Activated CD4-positive, alpha-beta T cell treated with anti-CD3 and anti-CD28 coated beads for 36 hours (primary cell): ENCODE measurements at regions of chr22 and their contacts with region 1.

Region 1: DNA sequence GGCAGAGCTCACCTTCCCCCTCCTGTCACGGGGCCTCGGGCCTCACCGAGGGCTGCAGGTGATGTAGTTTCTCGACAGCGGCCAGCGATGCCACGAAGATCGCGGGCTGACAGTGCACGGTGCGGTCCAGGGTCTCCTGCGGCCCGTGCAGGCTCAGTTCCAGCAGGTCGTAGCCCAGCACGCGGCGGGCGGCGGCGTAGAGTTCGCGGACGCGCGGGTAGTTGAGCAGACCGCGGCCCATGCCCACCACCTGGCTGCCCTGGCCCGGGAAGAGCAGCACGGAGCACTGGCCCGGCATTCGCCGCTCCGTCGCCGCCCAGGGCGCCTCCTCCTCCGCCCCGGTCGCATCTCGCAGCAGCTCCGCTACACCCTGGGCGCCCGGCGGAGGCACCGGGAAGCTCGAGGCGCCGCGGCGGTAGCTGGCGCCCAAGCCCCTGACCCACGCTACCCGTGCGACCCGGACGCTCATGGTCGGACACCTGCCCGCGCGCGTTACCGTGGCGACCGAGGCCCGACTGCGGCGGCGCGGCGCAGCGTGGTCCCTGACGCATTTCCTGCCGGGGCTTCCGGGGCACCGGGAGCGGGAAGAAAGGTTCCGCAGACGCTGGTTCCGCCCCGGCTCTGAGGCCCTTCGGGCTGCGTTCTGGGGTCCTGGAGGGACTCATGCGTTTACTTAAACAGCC is at the start of gene MCAT:
- DNase-seq: peak; percentile 88
- ATAC-seq: peak; percentile 93
- H3K4me3 Mint-ChIP-seq: peak within 1 kb of the TSS; percentile 85
- H3K27ac Mint-ChIP-seq: peak within 1 kb of the TSS; percentile 95
- H3K4me1 Mint-ChIP-seq: peaks cover 27% of the 10 kb centered on the region
- H3K27me3 Mint-ChIP-seq: no peaks in the 10 kb centered on the region
- total RNA-seq, gene MCAT: 13.8 to 16.9 TPM

Region 2: GRCh38 chr22:42856865-42857704 is 285.9 kb before region 1 on chr22 and contains the start of gene ARFGAP3:
- CTCF ChIA-PET with region 1: no interaction called
- POLR2A ChIA-PET with region 1: no interaction called
- intact Hi-C with region 1: loop called in 1 of 2 experiments (anchors 1 kb)
- DNase-seq: peak; percentile 98
- ATAC-seq: peak; percentile 91
- H3K4me3 Mint-ChIP-seq: peak within 1 kb of the TSS; percentile 83
- H3K27ac Mint-ChIP-seq: peak within 1 kb of the TSS; percentile 85
- H3K4me1 Mint-ChIP-seq: peaks cover 11% of the 10 kb centered on the region
- H3K27me3 Mint-ChIP-seq: peaks cover 6% of the 10 kb centered on the region
- total RNA-seq, gene ARFGAP3: 22.5 to 23.0 TPM

Region 3: GRCh38 chr22:42947211-42947990 is 195.6 kb before region 1 on chr22:
- CTCF ChIA-PET with region 1: no interaction called
- POLR2A ChIA-PET with region 1: no interaction called
- intact Hi-C with region 1: no loop called
- DNase-seq: no peak
- ATAC-seq: no peak
- H3K4me3 Mint-ChIP-seq: no peak overlapping the region
- H3K27ac Mint-ChIP-seq: no peak overlapping the region
- H3K4me1 Mint-ChIP-seq: peaks cover 50% of the 10 kb centered on the region
- H3K27me3 Mint-ChIP-seq: no peaks in the 10 kb centered on the region

Region 4: GRCh38 chr22:43110444-43110926 is 32.5 kb before region 1 on chr22 and contains the start of gene BIK:
- CTCF ChIA-PET with region 1: no interaction called
- POLR2A ChIA-PET with region 1: no interaction called
- intact Hi-C with region 1: loop called in 1 of 2 experiments (anchors 1 kb)
- DNase-seq: peak; percentile 59
- ATAC-seq: peak; percentile 72
- H3K4me3 Mint-ChIP-seq: peak within 1 kb of the TSS; percentile 74
- H3K27ac Mint-ChIP-seq: no peak within 1 kb of the TSS
- H3K4me1 Mint-ChIP-seq: peaks cover 3% of the 10 kb centered on the region
- H3K27me3 Mint-ChIP-seq: peaks cover 3% of the 10 kb centered on the region
- total RNA-seq, gene BIK: 1.4 to 1.9 TPM

Region 5: DNA sequence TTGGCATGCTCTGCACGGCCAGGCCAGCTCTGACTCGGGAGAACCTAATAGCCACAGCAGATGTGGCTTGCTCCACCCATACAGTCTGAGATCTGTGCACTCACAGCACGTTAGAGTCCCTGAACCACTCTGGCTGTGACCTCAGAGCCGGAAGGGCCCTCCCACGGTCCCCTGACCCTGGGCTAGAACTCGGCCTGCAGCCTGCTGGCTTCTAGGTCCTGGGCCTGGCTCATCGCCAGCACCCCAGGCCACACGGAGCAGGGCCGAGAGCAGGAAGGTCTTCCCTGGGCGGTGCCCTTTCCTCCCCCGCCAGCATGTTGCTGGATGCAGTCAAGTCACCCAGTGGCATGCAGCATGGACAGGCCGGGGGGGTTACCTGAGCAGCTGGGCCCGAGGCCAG is 79.2 kb after region 1 on chr22:
- CTCF ChIA-PET with region 1: no interaction called
- POLR2A ChIA-PET with region 1: no interaction called
- intact Hi-C with region 1: no loop called
- DNase-seq: no peak
- ATAC-seq: no peak
- H3K4me3 Mint-ChIP-seq: no peak overlapping the region
- H3K27ac Mint-ChIP-seq: no peak overlapping the region
- H3K4me1 Mint-ChIP-seq: no peaks in the 10 kb centered on the region
- H3K27me3 Mint-ChIP-seq: no peaks in the 10 kb centered on the region